AG04450 (cell line): ENCODE measurements at regions of chr21 and their contacts with region 1.

Region 1: GRCh38 chr21:43712308-43712974 is 6.5 kb upstream of the PDXK start:
- DNase-seq: no peak
- H3K4me3 ChIP-seq: no peak overlapping the region
- H3K27ac ChIP-seq: no peak overlapping the region
- H3K27me3 ChIP-seq: no peaks in the 10 kb centered on the region
- CTCF ChIP-seq: no peak

Region 2: DNA sequence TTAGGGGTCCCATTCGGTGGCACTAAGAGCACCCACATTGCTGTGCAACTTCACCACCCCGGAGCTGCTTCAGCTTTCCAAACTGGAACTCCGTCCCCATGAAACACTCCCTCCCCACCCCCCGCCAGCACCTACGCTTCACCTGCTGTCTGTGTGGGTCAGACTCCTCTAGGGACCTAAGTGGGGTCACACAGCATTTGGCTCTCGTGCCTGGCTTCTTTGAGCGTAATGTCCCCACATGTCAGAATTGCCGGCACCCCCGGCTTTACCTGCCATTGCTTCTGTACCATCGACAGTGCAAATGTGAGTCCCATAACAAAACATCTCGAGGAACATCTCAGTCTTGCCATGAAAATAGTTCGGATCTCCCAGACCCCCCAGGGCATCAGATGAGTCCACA is 116.7 kb after region 1 on chr21:
- CTCF ChIA-PET with region 1: no interaction called
- POLR2A ChIA-PET with region 1: interaction called, 12 read pairs
- DNase-seq: no peak
- H3K4me3 ChIP-seq: no peak overlapping the region
- H3K27ac ChIP-seq: no peak overlapping the region
- H3K27me3 ChIP-seq: peaks cover 26% of the 10 kb centered on the region
- CTCF ChIP-seq: no peak